B cell (primary cell): ENCODE measurements at regions of chrX and their contacts with region 1.

Region 1: GRCh38 chrX:24777660-24778059 is 83.9 kb downstream of the POLA1 start:
- DNase-seq: peak; percentile 57
- ATAC-seq: peak; percentile 81
- H3K4me3 ChIP-seq: peak overlapping the region in 1 of 5 experiments; percentile 29
- H3K4me3 Mint-ChIP-seq: peak overlapping the region; percentile 79
- H3K27ac ChIP-seq: peak overlapping the region; percentile 12 to 27
- H3K27ac Mint-ChIP-seq: peak overlapping the region; percentile 95
- H3K4me1 ChIP-seq: peaks cover 6 to 9% of the 10 kb centered on the region in 2 donors
- H3K4me1 Mint-ChIP-seq: peaks cover 25% of the 10 kb centered on the region
- H3K27me3 ChIP-seq: no peaks in the 10 kb centered on the region
- H3K27me3 Mint-ChIP-seq: no peaks in the 10 kb centered on the region
- CTCF ChIP-seq: no peak

Region 2: GRCh38 chrX:24169211-24169610 is 608.4 kb before region 1 on chrX:
- CTCF ChIA-PET with region 1: no interaction called
- POLR2A ChIA-PET with region 1: no interaction called
- intact Hi-C with region 1: no loop called
- DNase-seq: peak; percentile 53
- ATAC-seq: peak; percentile 78
- H3K4me3 ChIP-seq: peak overlapping the region in 1 of 5 experiments; percentile 3
- H3K4me3 Mint-ChIP-seq: peak overlapping the region; percentile 81
- H3K27ac ChIP-seq: peak overlapping the region; percentile 44 to 70
- H3K27ac Mint-ChIP-seq: peak overlapping the region; percentile 81
- H3K4me1 ChIP-seq: peaks cover 31 to 40% of the 10 kb centered on the region in 2 donors
- H3K4me1 Mint-ChIP-seq: peaks cover 38% of the 10 kb centered on the region
- H3K27me3 ChIP-seq: no peaks in the 10 kb centered on the region
- H3K27me3 Mint-ChIP-seq: no peaks in the 10 kb centered on the region
- CTCF ChIP-seq: no peak

Region 3: GRCh38 chrX:24693453-24694202 is 84.0 kb before region 1 on chrX and contains the start of gene POLA1:
- CTCF ChIA-PET with region 1: no interaction called
- POLR2A ChIA-PET with region 1: no interaction called
- intact Hi-C with region 1: loop called (anchors 10 kb)
- DNase-seq: peak; percentile 76
- ATAC-seq: peak; percentile 92
- H3K4me3 ChIP-seq: peak within 1 kb of the TSS; percentile 44 to 73 (median 67)
- H3K4me3 Mint-ChIP-seq: peak within 1 kb of the TSS; percentile 91
- H3K27ac ChIP-seq: peak within 1 kb of the TSS; percentile 38 to 73
- H3K27ac Mint-ChIP-seq: peak within 1 kb of the TSS; percentile 80
- H3K4me1 ChIP-seq: peaks cover 7 to 9% of the 10 kb centered on the region in 2 donors
- H3K4me1 Mint-ChIP-seq: peaks cover 17% of the 10 kb centered on the region
- H3K27me3 ChIP-seq: no peaks in the 10 kb centered on the region
- H3K27me3 Mint-ChIP-seq: no peaks in the 10 kb centered on the region
- CTCF ChIP-seq: no peak
- total RNA-seq, gene POLA1: 16.2 and 16.3 TPM in 2 replicates